A673 (cell line): ENCODE measurements at regions of chr20 and their contacts with region 1.

Region 1: GRCh38 chr20:64131406-64131805 is 24.0 kb upstream of the NPBWR2 start:
- DNase-seq: peak; percentile 60
- H3K4me3 ChIP-seq: no peak overlapping the region
- H3K27ac ChIP-seq: no peak overlapping the region
- H3K4me1 ChIP-seq: no peaks in the 10 kb centered on the region
- H3K27me3 ChIP-seq: peaks cover 36% of the 10 kb centered on the region
- CTCF ChIP-seq: peak; percentile 50

Region 2: DNA sequence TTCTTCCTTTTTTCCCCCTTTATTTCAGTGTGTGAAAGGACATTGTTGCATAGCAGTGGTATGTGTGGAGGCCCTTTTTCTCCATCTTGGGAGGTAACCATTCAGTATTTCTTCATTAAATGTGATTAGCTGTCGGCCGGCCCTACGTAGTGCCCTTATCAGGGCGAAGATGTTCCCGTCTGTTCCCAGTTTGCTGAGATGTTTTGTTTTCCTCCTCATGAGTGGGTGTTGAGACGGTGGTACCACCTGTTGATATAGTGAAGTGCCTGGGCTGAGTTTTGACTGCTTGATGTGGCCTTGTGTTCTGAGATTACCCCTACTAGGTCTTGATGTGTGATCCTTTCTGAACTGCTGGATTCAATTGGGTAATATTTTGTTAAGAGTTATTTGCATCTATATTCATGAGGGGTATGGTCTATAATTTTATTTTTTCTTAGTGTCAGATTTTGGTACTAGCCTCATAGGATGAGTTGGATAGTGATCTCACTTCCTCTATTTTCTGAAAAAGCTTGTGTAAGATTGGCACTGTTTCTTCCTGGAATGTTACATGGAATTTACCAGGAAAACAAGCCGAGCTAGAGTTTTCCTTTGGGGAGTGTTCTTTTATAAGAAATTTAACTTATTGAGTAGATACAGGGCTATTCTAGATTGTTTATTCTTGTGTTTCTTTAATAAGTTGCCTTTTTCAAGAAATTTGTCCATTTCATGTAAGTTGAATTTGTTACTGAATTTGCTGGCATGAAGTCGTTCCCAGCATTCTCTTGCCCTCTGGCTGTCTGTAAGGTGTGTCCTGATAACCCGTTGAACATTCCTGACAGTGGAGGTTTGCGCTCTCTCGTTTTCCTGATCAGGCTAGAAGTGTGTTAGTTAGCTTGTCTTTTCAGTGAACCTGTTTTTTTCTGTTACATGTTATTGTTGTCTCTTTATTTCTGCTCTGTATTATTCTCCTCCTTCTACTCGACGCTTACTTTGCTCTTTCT is 1944.2 kb before region 1 on chr20:
- CTCF ChIA-PET with region 1: no interaction called
- POLR2A ChIA-PET with region 1: interaction called, 15 read pairs
- intact Hi-C with region 1: no loop called
- DNase-seq: no peak
- H3K4me3 ChIP-seq: no peak overlapping the region
- H3K27ac ChIP-seq: no peak overlapping the region
- H3K4me1 ChIP-seq: peaks cover under 1% of the 10 kb centered on the region
- H3K27me3 ChIP-seq: no peaks in the 10 kb centered on the region
- CTCF ChIP-seq: no peak